Spleen (tissue), 13 donors: ENCODE measurements at regions of chr12 and their contacts with region 1.

Region 1: DNA sequence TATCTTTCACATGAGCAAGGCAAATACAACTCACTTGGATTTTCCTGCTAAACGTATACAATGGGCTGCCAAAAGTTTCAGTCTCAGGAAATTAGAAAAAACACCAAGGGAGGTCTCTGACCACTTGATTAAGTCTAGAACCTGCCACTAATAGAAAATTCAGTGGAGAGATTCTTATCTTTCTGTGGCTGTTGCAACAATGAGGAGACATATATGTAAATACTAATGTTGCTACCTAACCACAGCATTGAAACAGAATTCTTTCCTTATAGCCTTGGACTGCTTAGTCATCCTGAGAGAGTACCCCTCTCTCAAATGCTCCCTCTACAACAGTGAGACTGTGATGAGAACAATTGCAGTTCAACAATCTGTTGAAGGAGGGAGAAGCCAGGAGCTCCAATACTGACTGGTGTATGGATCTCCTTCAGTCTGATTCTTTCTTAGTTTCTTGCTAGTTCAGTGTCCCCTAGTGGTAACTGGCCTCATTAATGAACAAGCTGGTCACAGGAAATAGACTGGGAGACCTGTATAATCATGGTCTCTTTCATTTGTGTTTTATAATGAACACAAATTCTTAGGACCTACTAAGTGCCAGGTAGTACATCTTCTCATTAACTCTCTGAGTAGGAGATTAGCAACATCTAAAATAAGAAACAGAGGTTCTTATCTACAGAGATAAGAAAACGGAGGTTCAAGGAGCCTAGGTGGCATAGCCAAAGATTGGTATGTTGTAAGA is 164.5 kb downstream of the SLC38A4 start:
- DNase-seq: no peak
- H3K4me3 ChIP-seq: peak overlapping the region in 1 of 8 donors; percentile 13
- H3K27ac ChIP-seq: peak overlapping the region in 6 of 8 donors; percentile 13 to 61 (median 41)
- H3K4me1 ChIP-seq: peaks cover 14 to 44% (median 32%) of the 10 kb centered on the region in 6 donors
- H3K27me3 ChIP-seq: no peaks in the 10 kb centered on the region
- CTCF ChIP-seq: peak; percentile 48 to 83 (median 74)
- POLR2A ChIP-seq: no peak

Region 2: GRCh38 chr12:46147144-46147543 is 514.1 kb before region 1 on chr12:
- intact Hi-C with region 1: loop called (anchors 10 kb)
- DNase-seq: no peak
- H3K4me3 ChIP-seq: no peak overlapping the region
- H3K27ac ChIP-seq: no peak overlapping the region
- H3K4me1 ChIP-seq: no peaks in the 10 kb centered on the region
- H3K27me3 ChIP-seq: peaks cover 0 to 10% (median 0%) of the 10 kb centered on the region in 7 donors
- CTCF ChIP-seq: no peak
- POLR2A ChIP-seq: no peak

Region 3: DNA sequence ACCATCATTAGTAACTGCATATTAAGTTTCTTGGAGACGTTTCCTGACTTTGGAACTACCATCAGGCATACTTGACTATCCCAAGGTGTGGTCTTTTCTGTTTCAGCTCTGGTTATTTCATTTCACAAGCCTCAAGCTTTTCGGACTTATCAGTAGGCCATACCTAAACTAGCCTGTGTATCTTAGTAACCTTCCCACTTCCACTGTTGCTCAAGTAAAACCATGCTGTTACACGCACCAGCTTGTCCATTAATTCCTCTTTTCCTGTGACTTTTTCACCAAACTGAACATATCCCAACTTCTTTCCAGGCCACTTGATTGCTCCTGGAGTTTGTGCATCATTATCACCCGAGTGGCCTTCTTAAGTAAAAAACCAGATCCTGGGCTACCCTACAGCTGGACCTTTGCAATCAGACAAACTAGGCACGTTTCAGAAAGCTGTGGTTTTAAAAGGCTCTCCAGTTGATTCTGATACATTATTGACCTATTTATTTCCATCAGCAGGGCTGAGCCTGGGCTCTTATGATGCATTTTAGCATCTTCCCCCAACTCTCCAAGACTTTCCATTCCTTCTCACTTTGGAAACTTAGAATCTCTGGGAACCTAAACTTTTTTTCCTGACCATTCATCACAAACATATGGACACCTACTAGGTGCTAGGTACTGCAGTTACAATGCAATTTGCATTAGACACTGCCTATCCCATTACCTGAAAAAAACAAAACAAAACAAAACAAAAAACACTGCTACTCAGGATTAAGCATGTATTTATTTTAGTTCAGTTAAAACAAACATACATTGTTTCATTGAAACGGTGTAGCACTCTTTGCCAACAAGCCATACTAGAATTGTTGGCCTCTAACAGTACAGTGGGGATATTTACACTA is 303.6 kb before region 1 on chr12:
- intact Hi-C with region 1: loop called (anchors 5 kb)
- DNase-seq: no peak
- H3K4me3 ChIP-seq: no peak overlapping the region
- H3K27ac ChIP-seq: peak overlapping the region in 1 of 8 donors; percentile 10
- H3K4me1 ChIP-seq: peaks cover 11 to 46% (median 24%) of the 10 kb centered on the region in 6 donors
- H3K27me3 ChIP-seq: no peaks in the 10 kb centered on the region
- CTCF ChIP-seq: no peak
- POLR2A ChIP-seq: no peak

Region 4: GRCh38 chr12:46722394-46723185 is 61.3 kb after region 1 on chr12:
- intact Hi-C with region 1: no loop called
- DNase-seq: no peak
- H3K4me3 ChIP-seq: no peak overlapping the region
- H3K27ac ChIP-seq: no peak overlapping the region
- H3K4me1 ChIP-seq: no peaks in the 10 kb centered on the region
- H3K27me3 ChIP-seq: no peaks in the 10 kb centered on the region
- CTCF ChIP-seq: no peak
- POLR2A ChIP-seq: no peak